Activated B cell treated with CpG ODN at 0.5 μM for 24 hours (primary cell): ENCODE measurements at regions of chr1 and their contacts with region 1.

Region 1: GRCh38 chr1:15885701-15886610 is 38.4 kb downstream of the SPEN start:
- DNase-seq: peak; percentile 49
- ATAC-seq: peak; percentile 23
- H3K4me3 Mint-ChIP-seq: peak overlapping the region; percentile 75
- H3K27ac Mint-ChIP-seq: peak overlapping the region; percentile 87
- H3K4me1 Mint-ChIP-seq: peaks cover 78% of the 10 kb centered on the region
- H3K27me3 Mint-ChIP-seq: no peaks in the 10 kb centered on the region
- CTCF ChIP-seq: no peak

Region 2: GRCh38 chr1:15825800-15826199 is 60.2 kb before region 1 on chr1:
- CTCF ChIA-PET with region 1: no interaction called
- POLR2A ChIA-PET with region 1: interaction called, 11 read pairs
- intact Hi-C with region 1: no loop called
- DNase-seq: no peak
- ATAC-seq: no peak
- H3K4me3 Mint-ChIP-seq: no peak overlapping the region
- H3K27ac Mint-ChIP-seq: peak overlapping the region; percentile 54
- H3K4me1 Mint-ChIP-seq: peaks cover 42% of the 10 kb centered on the region
- H3K27me3 Mint-ChIP-seq: no peaks in the 10 kb centered on the region
- CTCF ChIP-seq: no peak

Region 3: DNA sequence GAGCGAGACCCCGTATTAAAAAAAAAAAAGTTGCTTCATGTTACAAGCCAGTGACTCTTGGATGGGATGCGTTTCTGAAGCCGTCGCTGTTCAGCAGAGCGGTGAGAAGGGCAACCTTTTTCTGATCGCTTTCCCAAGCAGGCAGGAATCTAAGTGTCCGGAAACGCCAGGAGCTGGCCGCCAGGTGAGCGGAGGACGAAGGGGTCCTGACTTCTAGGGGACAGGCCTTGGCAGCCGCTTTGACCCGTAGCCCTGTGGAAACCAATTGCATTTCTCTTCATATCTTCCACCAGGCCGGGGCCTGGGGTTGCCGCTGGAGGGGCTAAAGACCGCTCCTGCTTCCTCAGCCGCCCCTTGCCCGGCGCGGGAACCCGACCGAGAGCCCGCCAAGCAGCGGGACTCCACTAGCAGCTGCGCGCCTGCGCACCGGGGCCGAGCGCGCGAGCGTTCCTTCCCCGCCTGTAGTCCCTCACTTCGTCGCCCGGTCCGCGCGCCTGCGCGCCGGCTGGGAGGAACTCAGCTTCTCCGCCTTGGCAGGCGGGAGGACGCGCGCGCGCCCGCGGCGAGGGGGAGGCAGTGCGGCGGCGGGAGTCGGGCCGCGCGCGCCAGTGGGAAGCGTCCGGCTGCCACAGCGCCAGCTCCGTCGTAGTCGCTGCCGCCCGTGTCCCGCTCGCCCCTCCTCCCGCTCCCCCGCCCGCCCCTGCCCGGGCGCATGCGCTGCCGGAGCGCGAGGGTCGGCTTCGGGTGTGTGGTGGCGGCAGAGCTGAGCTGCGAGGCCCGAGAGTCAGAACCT is 38.7 kb before region 1 on chr1 and contains the start of gene SPEN:
- CTCF ChIA-PET with region 1: no interaction called
- POLR2A ChIA-PET with region 1: interaction called, 18 read pairs
- intact Hi-C with region 1: loop called (anchors 1 kb)
- DNase-seq: peak; percentile 99
- ATAC-seq: peak; percentile 74
- H3K4me3 Mint-ChIP-seq: peak within 1 kb of the TSS; percentile 99
- H3K27ac Mint-ChIP-seq: peak within 1 kb of the TSS; percentile 98
- H3K4me1 Mint-ChIP-seq: peaks cover 62% of the 10 kb centered on the region
- H3K27me3 Mint-ChIP-seq: no peaks in the 10 kb centered on the region
- CTCF ChIP-seq: no peak
- total RNA-seq, gene SPEN: 116 and 123 TPM in 2 replicates

Region 4: DNA sequence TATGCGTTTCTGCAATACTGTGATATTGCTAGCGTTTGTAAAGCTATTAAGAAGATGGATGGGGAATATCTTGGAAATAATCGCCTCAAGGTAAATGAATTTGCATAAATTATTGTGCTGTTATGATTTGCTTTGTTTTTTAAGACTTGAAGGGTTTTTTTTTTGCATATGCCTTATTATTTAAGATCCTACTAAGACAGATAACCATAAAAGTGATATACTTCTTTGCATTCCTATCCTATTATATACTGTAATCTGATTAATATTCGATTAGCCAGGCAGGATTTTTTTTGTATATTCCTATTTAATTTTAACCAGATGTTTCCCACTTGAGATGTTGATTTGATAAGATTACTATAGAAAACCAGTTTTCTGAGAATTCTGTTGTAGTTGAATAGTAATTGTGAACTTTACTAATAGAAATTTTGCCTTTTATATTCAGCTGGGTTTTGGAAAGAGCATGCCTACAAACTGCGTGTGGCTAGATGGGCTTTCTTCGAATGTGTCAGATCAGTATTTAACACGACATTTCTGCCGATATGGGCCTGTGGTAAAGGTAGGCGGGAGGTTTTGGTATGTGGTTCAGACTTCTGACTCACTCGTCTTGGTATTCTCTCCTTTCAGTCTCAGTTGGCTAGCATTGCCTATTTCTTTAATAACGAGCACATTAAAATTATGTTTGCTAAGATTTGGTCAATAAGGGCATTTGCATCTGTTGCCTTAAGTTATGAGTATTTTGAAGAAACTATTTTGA is 33.2 kb after region 1 on chr1:
- CTCF ChIA-PET with region 1: interaction called, 3 read pairs
- POLR2A ChIA-PET with region 1: no interaction called
- intact Hi-C with region 1: loop called (anchors 5 kb)
- DNase-seq: no peak
- ATAC-seq: peak; percentile 70
- H3K4me3 Mint-ChIP-seq: no peak overlapping the region
- H3K27ac Mint-ChIP-seq: peak overlapping the region; percentile 32
- H3K4me1 Mint-ChIP-seq: peaks cover 31% of the 10 kb centered on the region
- H3K27me3 Mint-ChIP-seq: no peaks in the 10 kb centered on the region
- CTCF ChIP-seq: no peak